ENCODE measurements at regions of chr1 and their contacts with region 1.

Region 1: DNA sequence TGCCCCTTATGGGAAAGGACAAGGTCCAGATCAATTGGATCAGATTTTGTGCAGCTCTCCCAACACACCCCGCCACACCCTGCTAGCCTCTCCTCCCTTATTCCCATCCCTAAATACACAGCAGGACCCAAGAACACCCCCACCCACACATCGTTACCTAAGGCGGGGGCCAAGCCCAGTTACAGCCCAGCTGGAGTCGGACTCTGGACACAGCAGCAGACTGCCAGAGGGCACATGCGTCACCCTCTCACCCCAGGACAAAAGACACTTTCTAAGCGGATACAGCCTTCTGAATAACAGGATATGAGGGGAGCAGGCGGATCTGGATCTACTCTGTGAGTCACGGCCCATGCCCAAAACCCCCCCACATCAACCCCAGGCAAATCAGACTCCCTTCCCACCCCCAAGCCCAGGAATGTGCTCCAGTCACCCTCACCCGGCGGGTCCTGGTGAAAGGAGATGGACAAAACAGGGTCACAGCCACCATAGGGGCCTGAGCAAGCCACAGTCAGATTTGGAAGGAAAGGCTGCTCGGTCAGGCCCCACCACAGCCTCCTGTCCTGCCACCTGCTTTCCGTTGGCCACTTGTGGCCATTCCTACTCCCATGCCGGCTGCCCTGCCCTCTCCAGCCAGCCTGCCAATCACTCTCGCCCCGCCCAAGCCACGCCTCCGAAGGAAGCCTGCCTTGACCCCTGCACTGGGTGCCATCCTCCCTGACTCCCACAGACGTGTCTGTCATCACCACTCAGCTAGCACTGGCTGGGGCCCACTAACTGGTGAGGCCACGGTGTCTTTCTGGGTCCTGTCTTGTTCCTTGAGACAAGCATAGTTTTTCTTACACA is 4.0 kb downstream of the S100A16 start:
- DNase-seq: no peak
- H3K4me3 Mint-ChIP-seq: no peak overlapping the region
- H3K27ac Mint-ChIP-seq: no peak overlapping the region
- H3K4me1 Mint-ChIP-seq: no peaks in the 10 kb centered on the region
- H3K27me3 Mint-ChIP-seq: peaks cover 2% of the 10 kb centered on the region

Region 2: GRCh38 chr1:153583976-153584375 is 25.0 kb before region 1 on chr1:
- intact Hi-C with region 1: loop called (anchors 1 kb)
- DNase-seq: no peak
- H3K4me3 Mint-ChIP-seq: no peak overlapping the region
- H3K27ac Mint-ChIP-seq: no peak overlapping the region
- H3K4me1 Mint-ChIP-seq: no peaks in the 10 kb centered on the region
- H3K27me3 Mint-ChIP-seq: peaks cover 15% of the 10 kb centered on the region

Measured in activated T-helper 1 cell treated with anti-CD3 and anti-CD28 coated beads, Interleukin-12 subunit alpha, Interleukin-12 subunit beta, Interleukin-2, Interleukin-4 antibody, amounts not matched to agents 30 ng/mL and 10 ng/mL and 1 ng/mL, durations not matched to agents 14 hours and 24 hours and 36 hours (primary cell).